ENCODE measurements at regions of chr2 and their contacts with region 1.

Region 1: GRCh38 chr2:108621087-108621559 is 86.9 kb downstream of the LIMS1 start:
- DNase-seq: peak; percentile 87
- H3K4me3 Mint-ChIP-seq: peak overlapping the region; percentile 78
- H3K27ac Mint-ChIP-seq: peak overlapping the region; percentile 96
- H3K4me1 Mint-ChIP-seq: peaks cover 78% of the 10 kb centered on the region
- H3K27me3 Mint-ChIP-seq: no peaks in the 10 kb centered on the region

Region 2: GRCh38 chr2:108607706-108608301 is 13.3 kb before region 1 on chr2:
- CTCF ChIA-PET with region 1: interaction called, 13 read pairs
- DNase-seq: peak; percentile 70
- H3K4me3 Mint-ChIP-seq: no peak overlapping the region
- H3K27ac Mint-ChIP-seq: no peak overlapping the region
- H3K4me1 Mint-ChIP-seq: peaks cover 39% of the 10 kb centered on the region
- H3K27me3 Mint-ChIP-seq: no peaks in the 10 kb centered on the region

Measured in activated naive CD4-positive, alpha-beta T cell treated with anti-CD3 and anti-CD28 coated beads, Interleukin-2, amount 10 ng/mL, durations not matched to agents 7 days and 5 days (primary cell).